ENCODE measurements at regions of chr9 and their contacts with region 1.

Region 1: GRCh38 chr9:128361986-128362646 is 9.1 kb upstream of the URM1 start:
- DNase-seq: peak; percentile 84 to 90 (median 86)
- H3K4me3 ChIP-seq: peak overlapping the region; percentile 19
- H3K27ac ChIP-seq: peak overlapping the region in 1 of 2 donors; percentile 27
- H3K4me1 ChIP-seq: peaks cover 5% of the 10 kb centered on the region
- H3K27me3 ChIP-seq: no peaks in the 10 kb centered on the region
- CTCF ChIP-seq: peak in 2 of 3 donors; percentile 68 to 92
- EP300 ChIP-seq: no peak
- POLR2A ChIP-seq: peak; percentile 15

Region 2: DNA sequence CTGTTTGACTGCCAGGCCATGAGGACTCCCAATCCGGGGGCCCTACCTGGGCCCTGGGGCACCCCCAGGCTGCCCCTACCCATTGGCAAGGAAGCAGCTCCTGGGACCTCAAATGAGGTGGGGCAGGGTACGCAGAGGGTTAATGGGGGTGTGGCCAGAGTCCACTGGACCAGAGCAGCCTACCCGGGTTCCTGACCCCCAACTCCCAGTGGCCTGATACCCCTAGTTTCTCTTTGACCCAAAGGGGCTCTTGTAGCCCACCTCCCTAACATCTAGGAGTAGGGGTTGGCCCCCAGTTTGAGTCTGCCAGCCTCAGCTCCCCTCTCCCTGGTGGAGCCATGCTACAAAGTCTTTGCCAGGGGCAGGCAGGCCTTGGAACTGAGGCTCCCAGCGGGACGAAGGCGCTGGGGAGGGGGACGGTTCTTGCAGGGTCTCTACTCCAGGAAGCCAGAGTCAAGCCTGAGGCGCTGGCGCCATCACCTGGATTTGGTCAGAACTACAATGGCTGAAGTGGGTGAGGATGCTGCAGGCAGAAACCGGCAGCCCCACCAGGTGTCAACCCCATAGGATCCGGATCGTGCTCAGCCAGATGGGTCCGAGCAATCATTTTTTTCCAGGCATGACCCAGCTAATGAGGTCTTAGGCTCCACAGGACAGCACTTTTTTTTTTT is 50.1 kb after region 1 on chr9:
- intact Hi-C with region 1: loop called in 1 of 4 experiments (anchors 10 kb)
- DNase-seq: no peak
- H3K4me3 ChIP-seq: no peak overlapping the region
- H3K27ac ChIP-seq: no peak overlapping the region
- H3K4me1 ChIP-seq: no peaks in the 10 kb centered on the region
- H3K27me3 ChIP-seq: no peaks in the 10 kb centered on the region
- CTCF ChIP-seq: no peak
- EP300 ChIP-seq: no peak
- POLR2A ChIP-seq: no peak

Region 3: GRCh38 chr9:128428644-128429512 is 66.8 kb after region 1 on chr9:
- intact Hi-C with region 1: no loop called
- DNase-seq: no peak
- H3K4me3 ChIP-seq: no peak overlapping the region
- H3K27ac ChIP-seq: no peak overlapping the region
- H3K4me1 ChIP-seq: no peaks in the 10 kb centered on the region
- H3K27me3 ChIP-seq: no peaks in the 10 kb centered on the region
- CTCF ChIP-seq: no peak
- EP300 ChIP-seq: no peak
- POLR2A ChIP-seq: no peak

Region 4: GRCh38 chr9:128575469-128575868 is 213.4 kb after region 1 on chr9:
- intact Hi-C with region 1: no loop called
- DNase-seq: no peak
- H3K4me3 ChIP-seq: no peak overlapping the region
- H3K27ac ChIP-seq: no peak overlapping the region
- H3K4me1 ChIP-seq: no peaks in the 10 kb centered on the region
- H3K27me3 ChIP-seq: no peaks in the 10 kb centered on the region
- CTCF ChIP-seq: no peak
- EP300 ChIP-seq: no peak
- POLR2A ChIP-seq: no peak

Measured in ovary (tissue), 10 donors.